Right ventricle myocardium superior (tissue), 1 donor: ENCODE measurements at regions of chr10 and their contacts with region 1.

Region 1: DNA sequence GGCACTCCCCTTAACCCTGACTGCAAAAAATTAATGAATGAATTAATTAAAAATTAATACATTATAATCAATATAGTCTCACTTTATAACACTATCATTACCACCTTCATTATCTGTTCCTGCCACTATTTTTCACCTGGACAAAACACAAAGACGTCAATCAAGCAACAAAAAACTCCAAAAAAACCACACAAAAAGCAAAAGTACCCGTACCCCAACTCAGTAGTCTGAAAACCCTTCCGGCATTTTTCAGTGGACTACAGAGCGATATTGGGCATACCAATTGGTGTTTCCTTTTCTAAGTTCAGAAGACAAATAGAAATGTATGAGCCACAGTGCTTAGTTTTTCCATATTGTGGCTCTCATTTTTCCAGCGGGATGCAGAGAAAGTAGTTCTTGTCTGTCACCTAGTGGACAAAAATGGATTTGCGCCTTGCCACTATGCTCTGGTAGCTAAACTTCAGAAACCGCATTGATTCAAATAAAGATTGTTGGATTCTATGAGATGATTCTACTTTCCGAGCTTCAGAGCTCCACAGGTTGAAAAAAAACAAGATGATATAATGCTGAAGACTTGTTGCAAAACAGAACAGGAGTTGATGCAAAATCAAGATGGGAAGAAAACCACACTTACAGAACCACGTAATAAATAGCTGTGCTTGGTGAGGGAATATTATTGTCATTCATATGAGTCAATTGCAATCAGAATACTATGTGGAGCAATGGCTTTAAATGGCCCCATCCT is 50.6 kb upstream of the ITGB1 start:
- DNase-seq: no peak
- ATAC-seq: peak; percentile 58

Region 2: GRCh38 chr10:32795598-32796183 is 213.0 kb before region 1 on chr10:
- intact Hi-C with region 1: loop called (anchors 2 kb)
- DNase-seq: no peak
- ATAC-seq: peak; percentile 52

Region 3: DNA sequence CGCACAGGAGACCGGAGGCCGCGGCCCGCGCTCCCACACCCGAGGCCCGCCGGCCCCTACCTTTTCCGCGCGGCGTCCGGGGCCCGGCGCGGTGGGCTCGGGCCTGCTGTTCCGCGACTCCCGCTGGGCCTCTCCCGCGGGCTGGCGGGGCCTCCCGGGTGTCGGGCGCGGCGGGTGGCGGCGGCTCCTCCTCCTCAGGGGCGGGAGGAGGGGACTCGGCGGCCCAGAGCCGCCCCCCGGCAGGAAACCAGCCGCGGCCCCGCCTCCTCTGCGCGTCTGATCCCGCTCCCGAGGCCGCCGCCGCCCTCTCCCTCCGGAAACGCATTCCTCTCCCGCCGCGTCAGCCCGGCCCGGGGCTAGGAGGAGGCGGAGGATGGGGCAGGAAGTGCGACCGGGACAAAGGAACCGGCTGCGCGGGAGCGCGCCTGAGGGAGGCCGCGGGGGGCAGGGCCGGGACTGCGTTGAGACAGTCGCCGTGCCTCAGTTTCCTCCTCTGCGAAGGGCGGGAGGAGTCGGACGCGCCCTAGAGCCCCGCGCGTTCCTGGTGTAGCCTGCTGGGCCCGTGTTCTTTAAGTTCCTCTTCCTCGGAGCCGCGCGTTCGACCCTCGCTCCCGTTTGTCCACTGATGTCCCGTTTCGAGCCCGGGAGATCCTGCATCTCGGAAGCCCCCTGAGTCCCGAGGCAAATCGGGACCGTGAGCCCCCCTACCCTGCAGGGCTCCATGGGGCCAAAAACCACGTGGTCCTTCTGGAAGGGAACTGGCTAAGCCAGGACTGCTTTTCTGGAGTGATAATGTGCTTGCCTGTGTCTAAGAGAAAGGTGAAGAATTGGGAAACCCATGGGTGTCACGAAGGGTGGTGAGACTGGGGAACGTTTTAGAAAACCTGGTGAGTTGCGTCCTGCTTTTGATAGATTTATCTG is 50.3 kb before region 1 on chr10 and contains the start of gene ITGB1:
- intact Hi-C with region 1: loop called (anchors 10 kb)
- DNase-seq: peak; percentile 98
- ATAC-seq: peak; percentile 96
- total RNA-seq, gene ITGB1: 458 TPM

Region 4: DNA sequence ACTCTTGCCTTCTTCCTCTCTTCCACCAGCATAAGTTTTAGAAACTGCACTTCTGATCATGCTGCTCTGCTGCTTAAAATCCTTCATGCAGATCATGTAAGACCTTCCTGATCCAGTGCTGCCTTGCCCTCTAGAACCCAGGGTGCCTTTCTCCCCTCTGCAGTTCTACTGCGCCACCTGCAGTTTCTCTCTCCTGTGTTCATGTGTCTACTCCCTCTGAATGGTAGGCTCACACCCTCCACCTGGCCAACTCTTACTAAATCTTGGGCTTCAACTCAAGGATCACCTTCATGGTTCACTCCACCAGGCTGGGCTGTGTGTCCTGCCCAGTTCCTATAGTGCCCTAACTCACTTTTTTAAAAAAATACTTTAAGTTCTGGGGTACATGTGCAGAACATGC is 124.0 kb after region 1 on chr10:
- intact Hi-C with region 1: no loop called
- DNase-seq: no peak
- ATAC-seq: no peak